ENCODE measurements at regions of chr9 and their contacts with region 1.

Region 1: DNA sequence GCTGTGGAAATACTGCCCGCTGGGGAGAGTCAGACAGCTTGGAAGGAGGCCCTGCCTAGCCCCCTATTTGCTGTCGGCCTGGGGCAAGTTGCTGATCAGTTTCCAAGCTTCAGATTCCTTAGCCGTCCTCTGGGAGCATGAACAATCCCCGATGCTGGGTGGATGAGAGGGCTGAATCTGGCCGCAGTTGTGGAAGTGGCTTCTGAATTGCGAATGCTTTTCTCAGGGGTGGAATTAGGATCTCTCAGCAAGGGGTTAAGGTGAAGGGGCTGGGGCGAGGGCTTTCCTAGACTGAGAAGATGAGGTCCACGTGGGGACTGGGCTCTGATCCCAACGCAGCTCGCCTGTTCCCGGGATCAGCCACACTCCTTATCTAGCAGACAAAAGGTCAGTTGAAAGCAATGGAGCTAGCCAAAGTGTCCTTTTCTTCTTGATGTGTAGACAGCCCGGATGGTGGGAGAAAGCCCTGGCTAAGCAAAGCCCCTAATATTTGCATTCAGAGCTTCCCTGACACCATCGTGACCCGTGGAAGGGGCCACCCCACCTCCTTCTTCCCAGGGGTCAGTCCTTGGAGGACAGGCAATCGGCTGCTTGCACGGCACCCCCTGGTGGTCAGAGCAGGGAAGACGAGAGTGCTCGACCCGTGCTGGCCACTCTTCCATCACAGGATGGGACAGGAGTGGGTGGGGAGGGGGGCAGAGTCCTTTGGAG is 54.9 kb downstream of the COL15A1 start:
- DNase-seq: peak; percentile 93
- H3K4me3 ChIP-seq: no peak overlapping the region
- H3K27ac ChIP-seq: peak overlapping the region; percentile 80 to 88 (median 83)
- H3K4me1 ChIP-seq: peaks cover 0 to 68% (median 53%) of the 10 kb centered on the region in 4 donors
- H3K27me3 ChIP-seq: no peaks in the 10 kb centered on the region
- CTCF ChIP-seq: peak; percentile 87 to 96 (median 94)
- EP300 ChIP-seq: no peak
- POLR2A ChIP-seq: no peak

Region 2: DNA sequence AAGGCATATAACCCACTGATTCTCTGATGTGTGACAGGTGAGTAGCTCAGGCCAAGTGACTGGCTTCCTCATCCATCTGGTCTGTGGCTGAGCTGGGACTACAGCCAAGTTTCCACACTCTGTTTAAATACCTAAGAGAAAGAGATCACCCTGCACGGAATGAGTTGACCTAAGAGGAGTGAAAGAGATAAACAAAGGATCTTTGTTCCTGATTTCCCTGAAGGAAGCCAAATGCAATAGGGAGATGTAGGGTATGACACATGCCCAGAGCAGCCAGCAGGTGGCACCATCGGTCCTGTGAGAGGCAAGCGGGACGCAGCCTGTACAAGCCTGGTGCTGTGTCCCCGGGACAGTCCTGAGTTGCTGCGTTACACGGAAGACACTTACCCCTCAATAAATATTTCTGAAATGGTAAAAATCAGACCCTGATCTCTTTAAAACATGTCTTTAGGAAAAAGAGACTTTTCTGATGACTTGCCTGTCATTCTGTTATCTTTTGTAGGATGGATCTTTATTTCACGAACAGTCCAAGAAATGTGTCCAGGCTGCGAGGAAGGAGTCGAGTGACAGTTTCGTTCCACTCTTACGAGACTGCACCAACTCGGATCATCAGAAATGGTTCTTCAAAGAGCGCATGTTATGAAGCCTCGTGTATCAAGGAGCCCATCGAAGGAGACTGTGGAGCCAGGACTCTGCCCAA is 150.0 kb before region 1 on chr9:
- intact Hi-C with region 1: loop called (anchors 2 kb)
- DNase-seq: peak; percentile 97
- H3K4me3 ChIP-seq: peak overlapping the region; percentile 13 to 27 (median 24)
- H3K27ac ChIP-seq: peak overlapping the region; percentile 72 to 84 (median 79)
- H3K4me1 ChIP-seq: peaks cover 0 to 47% (median 37%) of the 10 kb centered on the region in 4 donors
- H3K27me3 ChIP-seq: no peaks in the 10 kb centered on the region
- CTCF ChIP-seq: peak; percentile 87 to 94 (median 90)
- EP300 ChIP-seq: peak in 1 of 4 donors; percentile 1
- POLR2A ChIP-seq: no peak

Region 3: DNA sequence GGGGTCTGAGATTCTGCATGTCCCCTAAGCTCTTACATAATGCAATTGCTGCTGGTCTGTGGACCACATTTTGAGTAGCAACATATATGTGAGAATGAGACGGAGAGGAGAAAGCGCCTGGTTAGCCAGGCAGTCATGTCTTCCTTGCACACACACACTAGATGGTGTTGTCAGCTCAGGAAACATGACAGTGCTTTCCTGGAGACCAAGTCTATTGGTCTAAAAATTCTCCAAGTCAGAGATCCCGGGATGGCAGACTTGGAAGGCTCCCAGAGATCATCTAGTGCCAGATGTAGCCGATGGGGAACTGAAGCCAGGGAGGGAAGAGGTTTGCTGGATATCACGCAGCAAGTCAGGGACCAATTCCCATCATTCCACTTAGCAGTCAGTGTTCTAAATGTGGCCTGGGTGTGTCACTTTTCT is 137.7 kb before region 1 on chr9:
- intact Hi-C with region 1: loop called (anchors 2 kb)
- DNase-seq: peak; percentile 92
- H3K4me3 ChIP-seq: no peak overlapping the region
- H3K27ac ChIP-seq: peak overlapping the region; percentile 12 to 72 (median 66)
- H3K4me1 ChIP-seq: peaks cover 0 to 29% (median 12%) of the 10 kb centered on the region in 4 donors
- H3K27me3 ChIP-seq: no peaks in the 10 kb centered on the region
- CTCF ChIP-seq: peak; percentile 54 to 63 (median 60)
- EP300 ChIP-seq: peak in 2 of 4 donors; percentile 29 to 54
- POLR2A ChIP-seq: no peak

Region 4: GRCh38 chr9:98944057-98944733 is 54.4 kb before region 1 on chr9:
- intact Hi-C with region 1: loop called (anchors 2 kb)
- DNase-seq: peak; percentile 80
- H3K4me3 ChIP-seq: peak overlapping the region; percentile 64 to 78 (median 70)
- H3K27ac ChIP-seq: peak overlapping the region; percentile 85 to 89 (median 87)
- H3K4me1 ChIP-seq: peaks cover 0 to 42% (median 34%) of the 10 kb centered on the region in 4 donors
- H3K27me3 ChIP-seq: no peaks in the 10 kb centered on the region
- CTCF ChIP-seq: no peak
- EP300 ChIP-seq: no peak
- POLR2A ChIP-seq: peak in 1 of 2 donors; percentile 13

Region 5: DNA sequence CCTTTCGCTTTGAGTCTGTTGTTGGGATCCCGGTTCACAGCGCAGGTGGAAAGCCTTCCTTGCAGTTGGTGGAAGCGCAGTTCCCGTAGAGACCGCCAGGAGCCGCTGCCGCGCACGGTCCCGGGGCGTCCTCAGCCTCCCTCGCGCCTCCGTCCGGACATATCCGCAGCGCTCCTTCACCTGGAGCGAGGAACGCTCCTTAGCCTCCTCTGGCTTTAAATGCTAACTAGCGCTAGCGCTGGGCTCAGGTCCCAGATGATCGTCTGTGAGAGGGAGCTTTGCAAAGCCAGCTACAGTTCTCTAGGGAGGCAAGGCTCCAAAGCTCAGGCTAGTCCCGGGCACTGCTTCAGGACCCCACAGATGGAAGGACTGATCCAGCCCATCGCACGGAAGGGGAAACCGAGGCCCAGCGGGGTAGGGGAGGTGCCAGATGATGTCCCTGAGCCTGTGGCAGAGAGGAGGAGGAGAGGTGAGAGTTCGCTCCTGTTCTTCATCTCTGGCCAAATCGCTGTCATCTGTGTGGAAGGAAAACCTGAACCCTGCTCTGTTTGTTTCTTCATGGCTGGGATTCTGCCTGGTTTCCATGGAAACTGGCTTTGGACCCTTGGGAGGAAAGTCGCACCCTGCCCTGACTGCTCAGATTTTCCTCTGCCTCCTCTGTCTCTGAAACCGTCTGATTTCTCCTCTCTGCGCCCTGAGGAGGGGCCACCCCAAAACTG is 23.4 kb before region 1 on chr9:
- intact Hi-C with region 1: loop called (anchors 1 kb)
- DNase-seq: peak; percentile 95
- H3K4me3 ChIP-seq: peak overlapping the region; percentile 2 to 37 (median 32)
- H3K27ac ChIP-seq: peak overlapping the region; percentile 76 to 91 (median 80)
- H3K4me1 ChIP-seq: peaks cover 0 to 89% (median 76%) of the 10 kb centered on the region in 4 donors
- H3K27me3 ChIP-seq: no peaks in the 10 kb centered on the region
- CTCF ChIP-seq: peak; percentile 93 to 99 (median 97)
- EP300 ChIP-seq: no peak
- POLR2A ChIP-seq: no peak

Region 6: GRCh38 chr9:100011062-100011681 is 1012.6 kb after region 1 on chr9:
- intact Hi-C with region 1: no loop called
- DNase-seq: no peak
- H3K4me3 ChIP-seq: no peak overlapping the region
- H3K27ac ChIP-seq: no peak overlapping the region
- H3K4me1 ChIP-seq: no peaks in the 10 kb centered on the region
- H3K27me3 ChIP-seq: no peaks in the 10 kb centered on the region
- CTCF ChIP-seq: peak in 2 of 4 experiments; percentile 32 to 37
- EP300 ChIP-seq: no peak
- POLR2A ChIP-seq: no peak

Measured in sigmoid colon (tissue), 7 donors.